ENCODE measurements at regions of chr9 and their contacts with region 1.

Region 1: DNA sequence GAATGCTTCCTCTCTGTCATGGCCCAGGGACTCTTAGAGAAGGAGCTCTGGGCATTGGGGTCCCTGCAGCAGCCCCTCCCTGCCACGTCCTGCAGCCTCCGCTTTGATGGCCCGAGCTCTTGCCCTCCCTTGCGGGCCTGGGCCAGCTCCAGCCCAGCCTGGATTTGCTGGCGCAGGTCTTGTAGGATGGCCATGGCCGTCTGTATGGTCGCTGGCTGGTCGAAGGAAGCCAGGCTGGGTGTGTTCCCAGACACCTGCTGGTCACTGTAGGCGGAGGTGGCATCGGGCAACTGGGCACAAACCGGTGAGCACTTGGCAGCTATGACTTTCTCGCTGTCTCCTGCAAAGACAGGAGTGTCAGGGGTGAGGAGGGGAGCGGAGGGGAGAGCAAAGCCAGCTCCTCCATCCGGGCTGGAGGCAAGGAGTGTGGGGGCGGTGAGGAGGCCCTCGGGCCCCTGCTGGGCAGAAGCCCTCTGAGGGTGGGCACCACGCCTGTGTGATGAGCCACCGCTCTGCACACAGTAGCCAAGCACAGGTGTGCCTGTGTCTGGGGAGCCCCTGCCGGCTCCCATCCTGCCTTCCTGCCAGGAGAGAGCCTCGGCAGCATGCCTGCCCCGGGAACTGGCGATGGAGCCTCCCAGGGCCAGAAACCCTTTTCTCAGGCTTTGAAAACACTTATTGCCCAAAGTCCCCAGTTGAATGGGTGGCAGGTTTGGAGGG is 12.4 kb downstream of the CCDC187 start:
- DNase-seq: no peak
- H3K4me3 ChIP-seq: no peak overlapping the region
- H3K27ac ChIP-seq: no peak overlapping the region
- H3K4me1 ChIP-seq: peaks cover under 1 to 5% (median 3%) of the 10 kb centered on the region in 4 donors
- H3K27me3 ChIP-seq: peaks cover 23% of the 10 kb centered on the region
- CTCF ChIP-seq: no peak
- EP300 ChIP-seq: no peak
- POLR2A ChIP-seq: no peak

Region 2: GRCh38 chr9:135440620-135441019 is 850.8 kb before region 1 on chr9:
- in situ Hi-C with region 1: no loop called
- intact Hi-C with region 1: no loop called
- DNase-seq: no peak
- H3K4me3 ChIP-seq: no peak overlapping the region
- H3K27ac ChIP-seq: no peak overlapping the region
- H3K4me1 ChIP-seq: no peaks in the 10 kb centered on the region
- H3K27me3 ChIP-seq: peaks cover 3% of the 10 kb centered on the region
- CTCF ChIP-seq: no peak
- EP300 ChIP-seq: no peak
- POLR2A ChIP-seq: no peak

Region 3: DNA sequence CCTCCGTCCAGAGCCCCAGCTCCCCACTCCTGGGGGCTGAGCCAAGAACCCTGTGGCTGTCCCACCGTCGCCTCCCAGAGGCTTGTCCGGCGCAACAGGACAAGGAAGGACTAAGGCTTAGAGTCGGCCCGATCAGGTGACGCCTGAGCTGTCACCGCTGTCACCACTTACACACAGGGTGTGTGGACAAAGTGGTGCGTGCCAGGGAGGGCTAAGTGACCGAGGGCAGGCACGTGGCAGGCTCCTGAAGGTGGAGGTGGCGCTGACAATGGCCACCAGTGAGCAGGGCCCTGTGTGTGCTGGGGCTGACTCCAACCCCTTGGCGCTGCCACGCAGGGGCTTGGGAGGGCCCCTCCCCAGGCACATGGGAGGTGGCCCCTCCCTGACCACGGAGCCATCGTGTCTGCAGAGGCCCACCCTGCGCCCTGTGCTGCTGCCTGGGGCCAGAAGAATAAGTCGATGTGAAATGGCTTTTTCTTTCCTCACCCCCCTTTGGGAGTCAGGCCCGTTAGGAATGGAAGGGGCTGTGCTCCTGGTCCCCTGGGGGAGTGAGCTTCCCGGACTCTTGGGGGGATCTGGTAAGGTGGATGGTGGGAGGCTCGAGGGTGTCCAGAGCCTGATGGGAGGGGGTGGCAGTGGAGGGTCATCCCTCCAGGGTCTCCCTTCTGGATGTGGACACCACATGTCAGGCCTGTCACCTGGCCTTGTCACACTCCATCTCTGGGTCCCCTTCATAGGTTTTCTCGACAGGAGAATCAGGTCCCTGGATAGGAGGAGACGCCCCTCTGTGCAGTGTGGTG is 33.2 kb after region 1 on chr9:
- in situ Hi-C with region 1: no loop called
- intact Hi-C with region 1: loop called (anchors 1 kb)
- DNase-seq: no peak
- H3K4me3 ChIP-seq: no peak overlapping the region
- H3K27ac ChIP-seq: no peak overlapping the region
- H3K4me1 ChIP-seq: peaks cover 7 to 34% (median 18%) of the 10 kb centered on the region in 4 donors
- H3K27me3 ChIP-seq: peaks cover 37% of the 10 kb centered on the region
- CTCF ChIP-seq: no peak
- EP300 ChIP-seq: no peak
- POLR2A ChIP-seq: no peak

Region 4: DNA sequence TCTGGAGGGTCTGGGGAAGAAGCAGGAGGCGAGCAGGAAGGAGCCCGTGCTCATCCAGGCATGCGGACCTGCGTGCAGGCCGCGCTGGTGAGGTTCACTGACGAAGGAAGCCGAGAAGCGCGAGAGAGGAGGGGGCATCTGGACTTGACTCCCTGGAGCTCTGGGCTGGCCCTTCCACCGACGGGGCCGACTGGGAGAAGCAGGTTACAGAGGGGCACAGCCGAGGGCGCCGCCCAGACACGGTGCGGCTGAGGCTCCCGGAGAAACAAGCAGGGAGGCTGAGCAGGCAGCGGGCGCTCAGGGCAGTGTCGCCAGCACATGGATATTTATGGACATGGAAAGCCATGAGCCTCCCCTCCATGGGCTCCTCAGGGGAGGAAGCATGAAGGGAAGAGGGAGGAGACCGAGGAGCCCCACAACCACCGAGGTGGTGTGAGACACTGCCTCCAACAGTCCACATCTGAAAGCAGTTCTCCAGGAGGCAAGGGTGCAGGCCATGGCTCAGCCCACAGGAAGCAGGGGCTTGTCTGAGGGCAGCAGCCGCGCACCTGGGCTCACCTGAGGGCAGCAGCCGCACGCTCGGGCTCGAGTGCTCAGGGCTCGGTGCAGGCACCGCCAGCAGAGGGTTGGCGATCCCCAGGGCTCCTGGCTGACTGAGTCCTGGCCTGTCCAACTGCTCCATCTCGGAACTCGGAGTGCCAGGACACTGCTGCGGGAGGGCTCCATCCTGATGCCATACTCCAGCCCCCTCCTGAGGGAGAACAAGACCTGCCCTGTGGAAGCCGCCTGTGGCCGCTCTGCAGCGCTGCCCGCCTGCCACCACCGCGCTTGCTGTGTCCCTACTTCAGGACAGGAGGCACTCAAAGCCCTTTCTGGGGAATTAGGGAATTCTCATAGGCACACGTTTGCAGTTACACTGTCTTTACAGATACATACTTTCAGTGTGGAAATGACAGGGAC is 163.9 kb after region 1 on chr9:
- in situ Hi-C with region 1: no loop called
- intact Hi-C with region 1: no loop called
- DNase-seq: no peak
- H3K4me3 ChIP-seq: no peak overlapping the region
- H3K27ac ChIP-seq: no peak overlapping the region
- H3K4me1 ChIP-seq: no peaks in the 10 kb centered on the region
- H3K27me3 ChIP-seq: no peaks in the 10 kb centered on the region
- CTCF ChIP-seq: no peak
- EP300 ChIP-seq: no peak
- POLR2A ChIP-seq: no peak

Measured in transverse colon (tissue), 4 donors.